ENCODE measurements at regions of chr4 and their contacts with region 1.

Region 1: DNA sequence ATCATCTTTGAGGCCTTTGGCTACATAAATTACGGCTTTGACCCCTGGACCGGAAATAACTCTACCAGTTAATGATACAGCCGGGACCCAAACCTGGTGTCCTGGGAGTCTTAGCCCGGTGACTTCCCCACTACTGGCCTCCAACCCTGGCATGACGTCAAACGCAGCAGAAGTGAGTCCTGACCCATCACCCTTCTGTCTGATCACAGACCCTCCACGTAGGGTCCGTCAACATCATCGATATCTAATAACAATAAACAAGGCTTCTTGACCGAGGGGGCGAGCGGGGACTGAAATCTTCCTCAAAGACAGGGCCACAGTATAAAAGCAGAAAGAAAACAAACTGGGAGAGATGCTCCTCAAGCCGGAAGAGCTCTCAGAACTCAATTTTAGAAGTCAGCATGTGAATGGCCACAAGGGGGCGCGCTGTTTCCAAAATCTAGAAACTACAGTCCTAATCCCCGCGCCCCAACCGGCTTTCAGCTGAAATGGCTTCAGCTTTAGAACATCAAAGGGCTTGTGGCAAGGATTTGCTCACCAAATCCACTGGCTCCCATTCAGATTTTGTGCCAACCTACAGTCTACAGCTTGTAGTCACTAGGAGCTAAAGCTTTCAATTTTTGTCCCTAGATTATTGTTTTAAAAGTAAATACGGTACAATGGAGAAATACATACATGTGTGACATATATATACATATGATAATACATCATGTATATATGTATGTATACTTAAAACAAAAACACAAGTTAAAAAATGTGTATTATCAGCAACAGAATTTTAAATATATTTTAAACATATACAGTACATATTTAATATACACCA is 46.4 kb upstream of the ENPP6 start:
- DNase-seq: peak; percentile 85 to 92 (median 88)
- H3K4me3 ChIP-seq: no peak overlapping the region
- H3K4me3 Mint-ChIP-seq: peak overlapping the region in 5 of 8 donors; percentile 0 to 55 (median 38)
- H3K27ac ChIP-seq: no peak overlapping the region
- H3K27ac Mint-ChIP-seq: peak overlapping the region; percentile 3 to 75 (median 31)
- H3K4me1 ChIP-seq: peaks cover 28% of the 10 kb centered on the region
- H3K4me1 Mint-ChIP-seq: peaks cover 24 to 41% (median 35%) of the 10 kb centered on the region in 4 donors
- H3K27me3 ChIP-seq: no peaks in the 10 kb centered on the region
- H3K27me3 Mint-ChIP-seq: peaks cover 0 to 2% of the 10 kb centered on the region in 2 donors

Region 2: DNA sequence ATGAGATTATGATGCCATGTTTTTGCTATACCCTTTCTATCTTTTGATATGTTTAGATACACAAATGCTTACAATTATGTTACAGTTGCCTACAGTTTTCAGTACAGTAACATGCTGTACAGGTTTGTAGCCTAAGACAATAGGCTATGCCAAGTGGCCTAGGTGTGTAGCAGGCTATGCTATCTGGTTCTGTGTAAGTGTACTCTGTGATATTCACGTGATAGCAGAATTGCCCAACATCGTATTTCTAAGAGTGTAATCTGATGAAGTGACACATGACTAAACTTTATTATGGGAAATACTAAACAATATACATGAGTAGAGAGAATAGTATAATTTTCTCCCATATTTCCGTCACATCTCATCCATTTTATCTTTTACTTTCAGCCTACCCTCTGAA is 1041.1 kb before region 1 on chr4:
- CTCF ChIA-PET with region 1: no interaction called
- POLR2A ChIA-PET with region 1: no interaction called
- intact Hi-C with region 1: no loop called
- DNase-seq: no peak
- H3K4me3 ChIP-seq: no peak overlapping the region
- H3K4me3 Mint-ChIP-seq: no peak overlapping the region
- H3K27ac ChIP-seq: no peak overlapping the region
- H3K27ac Mint-ChIP-seq: no peak overlapping the region
- H3K4me1 ChIP-seq: no peaks in the 10 kb centered on the region
- H3K4me1 Mint-ChIP-seq: no peaks in the 10 kb centered on the region
- H3K27me3 ChIP-seq: no peaks in the 10 kb centered on the region
- H3K27me3 Mint-ChIP-seq: peaks cover 0 to 1% of the 10 kb centered on the region in 2 donors

Region 3: DNA sequence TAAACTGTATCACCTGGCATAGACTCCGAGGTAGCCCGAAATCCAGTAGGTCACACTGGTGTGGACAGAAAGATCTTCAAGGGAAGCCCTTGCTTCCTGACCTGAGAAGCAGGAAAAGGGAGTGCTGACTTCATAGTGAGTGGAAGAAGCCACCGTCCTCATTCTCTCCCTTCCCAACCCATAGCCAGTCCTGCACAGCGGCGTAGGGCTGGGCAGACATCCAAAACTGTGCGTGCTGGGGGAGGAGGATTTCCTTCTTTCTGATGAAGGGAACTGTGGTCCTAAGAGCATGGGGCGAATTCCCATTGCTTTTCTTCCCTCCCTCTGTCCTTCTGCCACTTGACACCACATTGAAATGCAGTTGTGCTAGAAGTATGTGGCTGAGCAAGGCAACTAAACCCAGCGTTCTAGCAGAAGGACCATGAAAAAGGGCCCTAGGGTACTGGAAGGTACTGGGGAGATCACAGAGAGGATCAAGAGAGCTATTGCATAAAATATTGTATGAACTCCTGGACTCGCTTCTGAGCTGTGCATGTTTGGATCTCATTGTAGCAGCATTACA is 292.1 kb before region 1 on chr4:
- CTCF ChIA-PET with region 1: no interaction called
- POLR2A ChIA-PET with region 1: no interaction called
- intact Hi-C with region 1: no loop called
- DNase-seq: no peak
- H3K4me3 ChIP-seq: no peak overlapping the region
- H3K4me3 Mint-ChIP-seq: no peak overlapping the region
- H3K27ac ChIP-seq: no peak overlapping the region
- H3K27ac Mint-ChIP-seq: no peak overlapping the region
- H3K4me1 ChIP-seq: no peaks in the 10 kb centered on the region
- H3K4me1 Mint-ChIP-seq: no peaks in the 10 kb centered on the region
- H3K27me3 ChIP-seq: no peaks in the 10 kb centered on the region
- H3K27me3 Mint-ChIP-seq: peaks cover 11% of the 10 kb centered on the region in 2 donors

Region 4: GRCh38 chr4:184282251-184282713 is 18.2 kb after region 1 on chr4:
- CTCF ChIA-PET with region 1: interaction called, 30 read pairs
- POLR2A ChIA-PET with region 1: interaction called, 35 read pairs
- intact Hi-C with region 1: no loop called
- DNase-seq: peak; percentile 25 to 64 (median 37)
- H3K4me3 ChIP-seq: no peak overlapping the region
- H3K4me3 Mint-ChIP-seq: peak overlapping the region in 7 of 8 donors; percentile 3 to 43 (median 26)
- H3K27ac ChIP-seq: peak overlapping the region; percentile 13
- H3K27ac Mint-ChIP-seq: peak overlapping the region; percentile 31 to 87 (median 75)
- H3K4me1 ChIP-seq: peaks cover 37% of the 10 kb centered on the region
- H3K4me1 Mint-ChIP-seq: peaks cover 28 to 48% (median 38%) of the 10 kb centered on the region in 4 donors
- H3K27me3 ChIP-seq: no peaks in the 10 kb centered on the region
- H3K27me3 Mint-ChIP-seq: no peaks in the 10 kb centered on the region

Region 5: GRCh38 chr4:184408021-184408710 is 144.0 kb after region 1 on chr4:
- CTCF ChIA-PET with region 1: interaction called, 16 read pairs
- POLR2A ChIA-PET with region 1: interaction called, 3 read pairs
- intact Hi-C with region 1: no loop called
- DNase-seq: no peak
- H3K4me3 ChIP-seq: no peak overlapping the region
- H3K4me3 Mint-ChIP-seq: peak overlapping the region in 2 of 8 donors; percentile 22 to 33
- H3K27ac ChIP-seq: no peak overlapping the region
- H3K27ac Mint-ChIP-seq: peak overlapping the region; percentile 31 to 91 (median 76)
- H3K4me1 ChIP-seq: peaks cover 37% of the 10 kb centered on the region
- H3K4me1 Mint-ChIP-seq: peaks cover 27 to 73% (median 48%) of the 10 kb centered on the region in 4 donors
- H3K27me3 ChIP-seq: no peaks in the 10 kb centered on the region
- H3K27me3 Mint-ChIP-seq: no peaks in the 10 kb centered on the region

Region 6: GRCh38 chr4:184544788-184545409 is 280.8 kb after region 1 on chr4:
- CTCF ChIA-PET with region 1: interaction called, 27 read pairs
- POLR2A ChIA-PET with region 1: no interaction called
- intact Hi-C with region 1: no loop called
- DNase-seq: no peak
- H3K4me3 ChIP-seq: no peak overlapping the region
- H3K4me3 Mint-ChIP-seq: no peak overlapping the region
- H3K27ac ChIP-seq: no peak overlapping the region
- H3K27ac Mint-ChIP-seq: no peak overlapping the region
- H3K4me1 ChIP-seq: no peaks in the 10 kb centered on the region
- H3K4me1 Mint-ChIP-seq: no peaks in the 10 kb centered on the region
- H3K27me3 ChIP-seq: no peaks in the 10 kb centered on the region
- H3K27me3 Mint-ChIP-seq: peaks cover 0 to 1% of the 10 kb centered on the region in 2 donors

Region 7: DNA sequence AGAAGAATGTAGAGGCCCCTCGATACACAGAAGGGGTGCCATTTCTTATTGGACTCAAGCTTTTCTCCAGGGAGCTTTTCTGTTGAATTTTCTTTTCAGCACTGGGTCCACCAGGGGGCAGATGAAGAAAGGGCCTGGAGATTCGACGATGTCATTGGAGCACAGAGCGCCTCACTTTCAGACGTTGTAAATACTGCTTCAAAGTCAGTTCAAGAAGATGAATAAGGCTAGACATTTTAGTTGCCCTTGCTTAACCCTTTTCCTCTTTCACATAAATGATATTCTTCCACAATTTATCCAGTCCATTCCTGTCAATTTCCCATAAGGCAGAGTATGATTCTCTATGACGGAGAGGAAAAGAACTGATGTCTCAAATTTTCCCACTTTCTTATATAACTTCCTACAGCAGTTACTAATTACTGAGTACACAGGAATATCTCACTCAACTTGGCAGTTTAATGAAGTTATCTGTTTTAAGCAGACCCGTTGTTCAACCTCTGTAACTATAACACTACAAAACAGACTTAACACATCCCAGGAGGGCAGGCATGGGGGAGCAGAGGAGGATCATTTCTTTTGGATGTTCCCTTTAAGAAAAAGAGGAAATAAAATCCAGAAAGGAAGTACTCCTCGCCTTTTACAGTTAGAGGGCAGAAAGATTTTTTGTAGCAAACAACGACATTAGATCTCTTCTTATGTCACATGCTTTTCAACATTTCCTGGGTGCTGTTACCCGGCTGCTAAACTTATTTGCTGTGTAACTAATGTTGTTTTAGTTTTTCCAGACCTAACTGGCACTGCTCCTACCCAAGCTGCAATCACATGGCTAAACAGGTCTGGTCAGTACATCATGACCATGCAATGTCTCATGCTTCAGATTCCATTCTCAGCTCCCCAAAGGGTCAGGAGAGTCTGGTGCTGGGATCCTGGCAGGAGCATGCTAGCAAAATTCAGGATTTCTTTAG is 482.0 kb after region 1 on chr4:
- CTCF ChIA-PET with region 1: interaction called, 5 read pairs
- POLR2A ChIA-PET with region 1: no interaction called
- intact Hi-C with region 1: loop called (anchors 5 kb)
- DNase-seq: peak; percentile 61 to 64 (median 63)
- H3K4me3 ChIP-seq: no peak overlapping the region
- H3K4me3 Mint-ChIP-seq: no peak overlapping the region
- H3K27ac ChIP-seq: no peak overlapping the region
- H3K27ac Mint-ChIP-seq: peak overlapping the region in 2 of 7 donors; percentile 17 to 71
- H3K4me1 ChIP-seq: peaks cover 4% of the 10 kb centered on the region
- H3K4me1 Mint-ChIP-seq: peaks cover 0 to 10% (median 2%) of the 10 kb centered on the region in 4 donors
- H3K27me3 ChIP-seq: no peaks in the 10 kb centered on the region
- H3K27me3 Mint-ChIP-seq: peaks cover 0 to 3% of the 10 kb centered on the region in 2 donors

Region 8: GRCh38 chr4:185005216-185005819 is 741.2 kb after region 1 on chr4:
- CTCF ChIA-PET with region 1: interaction called, 3 read pairs
- POLR2A ChIA-PET with region 1: no interaction called
- intact Hi-C with region 1: loop called (anchors 1 kb)
- DNase-seq: peak; percentile 62 to 67 (median 64)
- H3K4me3 ChIP-seq: no peak overlapping the region
- H3K4me3 Mint-ChIP-seq: peak overlapping the region; percentile 30 to 72 (median 60)
- H3K27ac ChIP-seq: no peak overlapping the region
- H3K27ac Mint-ChIP-seq: peak overlapping the region in 1 of 7 donors; percentile 6
- H3K4me1 ChIP-seq: peaks cover 7% of the 10 kb centered on the region
- H3K4me1 Mint-ChIP-seq: peaks cover 4 to 12% (median 5%) of the 10 kb centered on the region in 4 donors
- H3K27me3 ChIP-seq: no peaks in the 10 kb centered on the region
- H3K27me3 Mint-ChIP-seq: peaks cover 25 to 42% of the 10 kb centered on the region in 2 donors

Measured in CD4-positive, alpha-beta memory T cell (primary cell).